AG04449 (cell line): ENCODE measurements at regions of chr7 and their contacts with region 1.

Region 1: DNA sequence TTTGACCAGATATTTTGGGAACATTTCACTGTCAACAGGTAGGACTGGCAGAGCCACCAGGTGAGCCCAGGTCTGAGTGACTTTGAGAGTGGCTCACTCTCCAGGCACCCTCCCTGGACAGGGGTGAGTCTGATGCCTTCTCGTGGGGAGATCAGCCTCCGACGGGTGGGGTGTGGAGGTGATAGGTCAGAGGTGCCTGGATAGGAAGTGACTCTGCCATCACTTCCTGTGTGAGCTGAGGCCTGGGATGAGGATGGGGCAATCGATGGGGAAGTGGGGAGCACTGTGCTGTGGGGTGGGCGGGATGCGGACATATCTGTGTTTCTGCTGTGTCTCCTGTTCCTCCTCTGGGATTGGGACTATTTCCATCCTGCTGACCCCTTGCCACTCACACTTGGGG is 34.6 kb downstream of the IFT22 start:
- DNase-seq: no peak
- H3K4me3 ChIP-seq: no peak overlapping the region
- CTCF ChIP-seq: no peak

Region 2: DNA sequence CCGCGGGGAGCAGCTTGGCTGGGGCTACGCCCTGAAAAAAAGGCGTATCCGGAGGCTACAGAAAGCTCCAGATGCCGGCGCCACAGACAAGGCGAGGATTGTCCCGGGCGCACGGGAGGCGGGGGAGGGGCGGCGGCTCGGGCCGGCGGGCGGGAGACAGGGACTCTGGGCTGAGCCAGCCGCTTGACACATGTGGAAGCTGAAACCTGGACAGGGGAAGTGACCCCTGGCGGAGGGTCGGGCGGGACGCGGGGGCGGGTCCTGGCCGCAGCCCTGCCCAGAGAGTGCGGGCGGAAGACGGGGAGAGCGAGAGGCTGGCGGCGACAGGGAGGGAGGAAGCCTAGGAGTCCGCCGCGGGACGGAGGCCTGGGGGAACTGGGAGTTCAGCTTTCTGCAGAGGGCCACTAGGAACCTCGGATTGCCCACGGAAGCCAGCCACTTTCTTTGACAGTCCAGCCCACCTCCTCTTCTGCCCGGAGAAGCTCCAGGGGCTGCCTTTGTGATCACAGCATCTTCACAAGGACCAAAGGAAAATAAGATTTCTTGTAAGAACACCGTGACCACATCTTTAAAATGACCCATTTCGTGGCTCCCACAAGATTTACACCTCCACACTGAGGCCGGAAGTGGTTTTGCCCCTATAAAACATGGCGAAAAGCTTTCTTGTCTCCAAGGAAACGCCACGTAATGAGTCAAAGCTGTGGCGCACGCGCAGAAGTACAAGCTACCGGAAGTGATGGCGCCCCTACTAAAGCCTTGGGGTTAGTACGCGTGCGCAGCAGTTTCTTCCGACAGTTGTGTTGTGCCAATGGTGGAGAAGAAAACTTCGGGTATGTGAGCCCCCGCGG is 69.4 kb before region 1 on chr7 and contains the starts of genes PLOD3 and ZNHIT1:
- CTCF ChIA-PET with region 1: interaction called, 15 read pairs
- POLR2A ChIA-PET with region 1: interaction called, 3 read pairs
- DNase-seq: peak; percentile 85
- H3K4me3 ChIP-seq: peak within 1 kb of the TSS; percentile 91
- CTCF ChIP-seq: peak; percentile 13

Region 3: GRCh38 chr7:101258243-101258731 is 28.7 kb before region 1 on chr7:
- CTCF ChIA-PET with region 1: interaction called, 15 read pairs
- POLR2A ChIA-PET with region 1: interaction called, 3 read pairs
- DNase-seq: no peak
- H3K4me3 ChIP-seq: no peak overlapping the region
- CTCF ChIP-seq: no peak

Region 4: GRCh38 chr7:101299511-101300464 is 12.8 kb after region 1 on chr7:
- CTCF ChIA-PET with region 1: interaction called, 12 read pairs
- POLR2A ChIA-PET with region 1: no interaction called
- DNase-seq: no peak
- H3K4me3 ChIP-seq: no peak overlapping the region
- CTCF ChIP-seq: no peak